ENCODE measurements at regions of chr2 and their contacts with region 1.

Region 1: GRCh38 chr2:95207111-95207961 is at the start of gene ZNF892:
- DNase-seq: peak; percentile 94
- H3K4me3 ChIP-seq: peak within 1 kb of the TSS; percentile 50 to 79 (median 64)
- H3K27ac ChIP-seq: peak within 1 kb of the TSS; percentile 87 to 94 (median 90)
- H3K4me1 ChIP-seq: peaks cover 0 to 21% (median 5%) of the 10 kb centered on the region in 4 donors
- H3K27me3 ChIP-seq: no peaks in the 10 kb centered on the region
- CTCF ChIP-seq: peak in 4 of 5 experiments; percentile 11 to 30 (median 26)
- EP300 ChIP-seq: no peak
- POLR2A ChIP-seq: peak; percentile 35
- total RNA-seq, gene ZNF892: 3.4 to 6.8 (median 3.5) TPM in 3 of 4 donors, not detected in the other

Region 2: GRCh38 chr2:95121407-95122196 is 85.7 kb before region 1 on chr2 and contains the start of gene MRPS5:
- in situ Hi-C with region 1: no loop called
- intact Hi-C with region 1: loop called (anchors 2 kb)
- DNase-seq: peak; percentile 88
- H3K4me3 ChIP-seq: peak within 1 kb of the TSS; percentile 81 to 98 (median 94)
- H3K27ac ChIP-seq: peak within 1 kb of the TSS; percentile 90 to 96 (median 92)
- H3K4me1 ChIP-seq: peaks cover 3 to 35% (median 16%) of the 10 kb centered on the region in 4 donors
- H3K27me3 ChIP-seq: no peaks in the 10 kb centered on the region
- CTCF ChIP-seq: peak in 1 of 5 experiments; percentile 29
- EP300 ChIP-seq: no peak
- POLR2A ChIP-seq: peak; percentile 62
- total RNA-seq, gene MRPS5: 61.7 to 145 (median 77.2) TPM

Region 3: GRCh38 chr2:95333888-95334338 is 126.6 kb after region 1 on chr2:
- in situ Hi-C with region 1: no loop called
- intact Hi-C with region 1: loop called (anchors 10 kb)
- DNase-seq: peak; percentile 73
- H3K4me3 ChIP-seq: no peak overlapping the region
- H3K27ac ChIP-seq: peak overlapping the region in 2 of 4 donors; percentile 53 to 67
- H3K4me1 ChIP-seq: peaks cover 0 to 7% (median 1%) of the 10 kb centered on the region in 4 donors
- H3K27me3 ChIP-seq: no peaks in the 10 kb centered on the region
- CTCF ChIP-seq: no peak
- EP300 ChIP-seq: peak; percentile 40
- POLR2A ChIP-seq: no peak